Sigmoid colon (tissue), 7 donors: ENCODE measurements at regions of chr10 and their contacts with region 1.

Region 1: DNA sequence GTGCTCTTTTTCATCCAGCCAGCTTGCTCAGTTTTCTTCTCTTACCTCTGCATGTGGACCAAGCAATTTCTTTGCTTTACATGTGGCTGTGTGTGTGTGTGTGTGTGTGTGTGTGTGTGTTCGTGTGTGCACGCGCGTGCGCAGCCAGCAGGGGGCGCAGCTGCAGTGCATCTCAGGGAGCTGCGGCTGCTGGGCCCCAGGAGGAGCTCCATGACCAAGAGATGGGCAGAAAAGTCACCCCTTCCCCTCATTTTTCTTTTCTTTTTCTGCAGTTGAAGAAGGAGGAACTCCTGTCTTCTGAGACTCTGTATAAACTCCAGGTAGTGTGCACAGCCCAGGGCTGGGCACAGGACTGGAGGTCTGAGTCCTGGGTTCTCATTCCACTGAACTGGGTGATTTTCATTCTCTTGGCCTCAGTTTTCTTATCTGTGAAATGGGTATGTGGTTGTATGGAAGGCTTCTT is 41.8 kb downstream of the BLNK start:
- DNase-seq: peak; percentile 81
- H3K4me3 ChIP-seq: no peak overlapping the region
- H3K27ac ChIP-seq: no peak overlapping the region
- H3K4me1 ChIP-seq: no peaks in the 10 kb centered on the region
- H3K27me3 ChIP-seq: no peaks in the 10 kb centered on the region
- CTCF ChIP-seq: peak; percentile 77 to 98 (median 84)
- EP300 ChIP-seq: no peak
- POLR2A ChIP-seq: no peak

Region 2: GRCh38 chr10:96017191-96017687 is 212.4 kb before region 1 on chr10:
- intact Hi-C with region 1: loop called (anchors 10 kb)
- DNase-seq: no peak
- H3K4me3 ChIP-seq: no peak overlapping the region
- H3K27ac ChIP-seq: no peak overlapping the region
- H3K4me1 ChIP-seq: peaks cover 0 to 10% (median 7%) of the 10 kb centered on the region in 4 donors
- H3K27me3 ChIP-seq: no peaks in the 10 kb centered on the region
- CTCF ChIP-seq: peak; percentile 47 to 71 (median 58)
- EP300 ChIP-seq: peak in 2 of 4 donors; percentile 48 to 49
- POLR2A ChIP-seq: no peak

Region 3: DNA sequence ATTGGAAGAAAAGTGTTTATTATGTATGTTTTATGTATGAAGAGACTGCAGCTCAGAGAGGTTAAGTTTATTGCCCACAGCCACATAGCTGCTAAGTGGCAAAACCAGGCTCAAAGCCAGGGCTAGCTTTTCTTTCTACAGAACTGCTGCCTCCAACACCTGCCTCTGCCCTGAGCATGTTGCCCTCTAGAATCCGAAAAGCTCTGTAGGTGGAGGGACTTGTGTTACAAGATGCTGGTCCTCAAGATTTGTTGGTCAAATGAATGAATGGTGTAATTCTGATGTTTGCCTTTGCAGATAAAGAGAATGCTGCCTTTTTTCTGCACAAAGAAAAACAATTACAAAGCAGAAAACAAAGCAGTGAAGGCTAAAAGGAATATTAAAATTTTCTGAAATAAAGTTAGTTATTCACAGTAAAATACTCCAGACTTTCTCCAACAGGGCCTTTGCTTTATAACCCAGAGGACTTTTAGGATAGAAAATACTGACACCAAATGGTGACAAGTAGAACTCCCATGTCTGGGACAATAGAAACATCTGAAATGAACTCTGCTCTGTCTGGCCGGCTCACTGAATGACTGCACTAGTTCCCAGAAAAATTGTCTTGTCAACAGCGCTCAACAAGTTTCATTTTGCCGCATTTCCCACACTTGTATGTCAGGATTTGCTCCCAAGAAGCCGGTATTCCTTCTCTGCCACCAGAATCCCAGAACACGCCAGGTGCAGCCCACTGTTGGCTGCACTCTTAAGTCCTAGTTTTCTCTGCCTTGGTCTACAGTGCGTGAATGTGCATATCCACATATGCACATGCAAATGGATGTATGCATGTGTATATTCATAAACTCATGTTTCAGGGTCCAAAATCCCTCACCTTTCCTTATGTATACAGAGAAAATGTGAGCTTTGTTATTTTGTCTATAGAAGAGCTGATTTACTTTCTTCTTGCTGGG is 63.6 kb after region 1 on chr10:
- intact Hi-C with region 1: loop called (anchors 1 kb)
- DNase-seq: no peak
- H3K4me3 ChIP-seq: no peak overlapping the region
- H3K27ac ChIP-seq: no peak overlapping the region
- H3K4me1 ChIP-seq: peaks cover 0 to under 1% (median under 1%) of the 10 kb centered on the region in 4 donors
- H3K27me3 ChIP-seq: no peaks in the 10 kb centered on the region
- CTCF ChIP-seq: peak in 3 of 4 experiments; percentile 28 to 52 (median 44)
- EP300 ChIP-seq: no peak
- POLR2A ChIP-seq: no peak

Region 4: GRCh38 chr10:96339957-96340904 is 110.6 kb after region 1 on chr10:
- intact Hi-C with region 1: loop called (anchors 5 kb)
- DNase-seq: no peak
- H3K4me3 ChIP-seq: no peak overlapping the region
- H3K27ac ChIP-seq: no peak overlapping the region
- H3K4me1 ChIP-seq: no peaks in the 10 kb centered on the region
- H3K27me3 ChIP-seq: no peaks in the 10 kb centered on the region
- CTCF ChIP-seq: peak in 1 of 4 experiments; percentile 31
- EP300 ChIP-seq: no peak
- POLR2A ChIP-seq: no peak